Activated CD8-positive, alpha-beta T cell treated with anti-CD3 and anti-CD28 coated beads, Interleukin-2, amount 10 ng/mL, durations not matched to agents 7 days and 5 days (primary cell): ENCODE measurements at regions of chr3 and their contacts with region 1.

Region 1: DNA sequence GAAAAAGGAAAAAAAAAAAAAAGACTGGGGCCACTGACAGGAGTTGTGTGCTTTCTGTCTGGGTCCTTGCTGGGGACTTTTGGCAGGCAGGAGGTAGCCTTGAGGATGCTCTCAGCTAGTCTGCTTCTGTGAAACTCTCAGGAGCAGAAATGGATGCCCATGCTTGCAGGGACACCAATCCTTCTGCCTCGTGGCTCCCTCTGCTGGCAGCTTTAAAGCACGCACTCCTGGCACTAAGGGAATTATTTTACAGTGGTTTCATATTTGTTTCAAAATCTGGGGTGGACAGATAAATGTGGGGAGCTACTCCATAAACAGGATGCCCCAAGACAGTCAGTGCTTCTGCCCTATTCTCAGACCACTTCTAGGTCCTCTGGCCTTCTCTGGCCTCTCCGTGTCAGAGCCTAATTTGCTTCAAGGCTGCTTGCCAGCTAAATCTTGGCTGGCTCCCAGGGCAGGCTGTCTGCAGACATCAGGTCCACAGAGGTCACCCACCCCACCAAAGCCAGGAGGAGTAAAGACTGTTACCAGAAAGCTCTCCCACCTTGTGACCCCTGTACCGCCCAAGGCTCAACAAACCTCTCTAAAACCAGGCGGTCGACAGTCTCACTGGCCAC is 17.1 kb downstream of the TRAIP start:
- DNase-seq: peak; percentile 88
- ATAC-seq: peak; percentile 90
- H3K4me3 Mint-ChIP-seq: no peak overlapping the region
- H3K27ac Mint-ChIP-seq: peak overlapping the region; percentile 30
- H3K4me1 Mint-ChIP-seq: peaks cover 1% of the 10 kb centered on the region
- H3K27me3 Mint-ChIP-seq: no peaks in the 10 kb centered on the region

Region 2: GRCh38 chr3:49786241-49786958 is 52.9 kb before region 1 on chr3 and contains the start of gene IP6K1:
- CTCF ChIA-PET with region 1: interaction called, 14 read pairs
- POLR2A ChIA-PET with region 1: interaction called, 4 read pairs
- DNase-seq: peak; percentile 100
- ATAC-seq: peak; percentile 99
- H3K4me3 Mint-ChIP-seq: peak within 1 kb of the TSS; percentile 86
- H3K27ac Mint-ChIP-seq: peak within 1 kb of the TSS; percentile 97
- H3K4me1 Mint-ChIP-seq: peaks cover 31% of the 10 kb centered on the region
- H3K27me3 Mint-ChIP-seq: peaks cover 3% of the 10 kb centered on the region
- total RNA-seq, gene IP6K1: 37.7 to 38.1 TPM

Region 3: GRCh38 chr3:49826016-49826415 is 13.3 kb before region 1 on chr3:
- CTCF ChIA-PET with region 1: interaction called, 19 read pairs
- POLR2A ChIA-PET with region 1: no interaction called
- DNase-seq: no peak
- ATAC-seq: no peak
- H3K4me3 Mint-ChIP-seq: no peak overlapping the region
- H3K27ac Mint-ChIP-seq: no peak overlapping the region
- H3K4me1 Mint-ChIP-seq: no peaks in the 10 kb centered on the region
- H3K27me3 Mint-ChIP-seq: no peaks in the 10 kb centered on the region

Region 4: GRCh38 chr3:49899815-49900214 is 60.5 kb after region 1 on chr3:
- CTCF ChIA-PET with region 1: interaction called, 15 read pairs
- POLR2A ChIA-PET with region 1: no interaction called
- DNase-seq: peak; percentile 35
- ATAC-seq: no peak
- H3K4me3 Mint-ChIP-seq: no peak overlapping the region
- H3K27ac Mint-ChIP-seq: no peak overlapping the region
- H3K4me1 Mint-ChIP-seq: peaks cover 18% of the 10 kb centered on the region
- H3K27me3 Mint-ChIP-seq: no peaks in the 10 kb centered on the region